Motor neuron (in vitro differentiated cells): ENCODE measurements at regions of chr4 and their contacts with region 1.

Region 1: DNA sequence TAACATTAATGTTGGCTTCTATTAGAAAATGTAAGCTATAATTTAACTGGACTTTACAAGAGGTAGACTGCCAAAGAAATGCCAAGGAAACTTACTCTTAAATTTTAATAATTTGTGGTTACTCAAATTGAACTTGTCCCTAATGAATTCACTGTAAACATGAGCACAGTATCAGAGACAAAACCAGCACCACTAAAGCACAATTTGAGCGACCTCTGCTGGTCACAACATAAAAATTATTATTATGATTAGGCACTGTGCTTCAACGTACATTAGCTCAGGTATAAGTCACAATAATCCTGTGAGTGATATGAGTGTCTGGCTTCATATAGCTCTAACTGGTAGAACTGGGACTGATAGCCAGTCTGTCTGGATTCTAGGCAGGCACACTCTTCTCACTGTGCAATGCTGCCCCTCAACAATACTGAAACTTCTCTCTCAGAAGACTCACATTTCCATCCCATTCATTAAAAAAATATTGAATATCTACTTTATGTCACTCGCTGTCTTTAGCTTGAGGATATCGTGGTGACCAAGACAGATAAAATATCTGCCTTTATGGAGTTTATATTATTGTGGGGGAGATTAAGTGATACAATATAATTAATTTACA is 8.0 kb downstream of the NUDT6 start:
- ATAC-seq: peak in 5 of 8 experiments; percentile 60 to 84 (median 74)
- H3K4me3 ChIP-seq: no peak overlapping the region
- H3K27ac ChIP-seq: no peak overlapping the region
- H3K4me1 ChIP-seq: no peaks in the 10 kb centered on the region

Region 2: GRCh38 chr4:122764821-122765215 is 149.6 kb before region 1 on chr4:
- in situ Hi-C with region 1: loop called in 4 of 9 experiments (anchors 10 to 25 kb)
- ATAC-seq: peak in 3 of 8 experiments; percentile 27 to 83 (median 71)
- H3K4me3 ChIP-seq: no peak overlapping the region
- H3K27ac ChIP-seq: no peak overlapping the region
- H3K4me1 ChIP-seq: no peaks in the 10 kb centered on the region